Activated CD4-positive, alpha-beta T cell treated with anti-CD3 and anti-CD28 coated beads for 36 hours (primary cell): ENCODE measurements at regions of chr15 and their contacts with region 1.

Region 1: GRCh38 chr15:60649845-60650548 is 171.1 kb upstream of the ICE2 start:
- DNase-seq: peak; percentile 68
- ATAC-seq: peak; percentile 89
- H3K4me3 Mint-ChIP-seq: peak overlapping the region; percentile 27
- H3K27ac Mint-ChIP-seq: peak overlapping the region; percentile 82
- H3K4me1 Mint-ChIP-seq: peaks cover 47% of the 10 kb centered on the region
- H3K27me3 Mint-ChIP-seq: no peaks in the 10 kb centered on the region

Region 2: GRCh38 chr15:60592371-60593169 is 57.4 kb before region 1 on chr15:
- CTCF ChIA-PET with region 1: interaction called, 4 read pairs
- POLR2A ChIA-PET with region 1: no interaction called
- intact Hi-C with region 1: loop called (anchors 2 kb)
- DNase-seq: peak; percentile 91
- ATAC-seq: peak; percentile 85
- H3K4me3 Mint-ChIP-seq: peak overlapping the region; percentile 76
- H3K27ac Mint-ChIP-seq: peak overlapping the region; percentile 51
- H3K4me1 Mint-ChIP-seq: peaks cover 47% of the 10 kb centered on the region
- H3K27me3 Mint-ChIP-seq: no peaks in the 10 kb centered on the region

Region 3: DNA sequence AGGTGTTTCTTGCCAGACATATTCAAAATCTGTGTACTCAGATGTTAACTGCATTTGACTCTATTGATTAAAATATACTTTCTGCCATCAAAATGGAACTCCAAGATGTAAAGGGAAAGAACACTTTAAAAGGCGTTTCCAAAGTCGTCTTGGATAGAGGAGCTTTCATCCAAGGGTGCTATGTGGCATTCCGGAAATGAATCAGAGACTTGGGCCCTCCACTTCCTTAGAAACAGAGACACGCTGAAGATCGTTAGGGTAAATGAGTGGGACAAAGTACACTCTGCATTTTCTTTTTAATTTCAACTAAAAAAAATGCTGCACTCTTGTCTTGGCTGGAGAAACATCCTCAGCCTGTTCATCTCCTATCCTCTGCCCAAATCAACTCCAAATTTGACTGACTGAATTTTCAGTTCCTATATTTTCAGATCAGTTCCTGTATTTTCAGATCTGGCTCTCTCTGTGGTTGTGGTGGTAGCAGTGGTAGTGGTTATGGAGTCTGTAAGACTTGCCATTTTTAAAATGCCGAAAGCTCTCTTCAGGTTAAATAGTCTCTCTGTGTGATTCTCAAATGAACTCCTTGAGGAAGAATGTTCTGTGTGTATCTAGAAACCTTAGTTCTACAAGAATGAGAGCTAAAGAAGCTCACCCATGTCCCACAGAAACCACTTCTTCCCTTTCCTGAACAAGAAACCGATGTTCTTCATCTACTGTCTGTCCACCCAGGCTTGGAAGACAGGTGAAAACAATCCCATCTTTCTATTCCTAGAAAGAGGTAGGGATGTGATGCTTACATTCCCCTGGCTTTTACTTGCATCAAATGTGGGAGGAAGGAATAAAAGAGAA is 14.3 kb before region 1 on chr15:
- CTCF ChIA-PET with region 1: no interaction called
- POLR2A ChIA-PET with region 1: no interaction called
- intact Hi-C with region 1: no loop called
- DNase-seq: no peak
- ATAC-seq: no peak
- H3K4me3 Mint-ChIP-seq: no peak overlapping the region
- H3K27ac Mint-ChIP-seq: no peak overlapping the region
- H3K4me1 Mint-ChIP-seq: peaks cover 7% of the 10 kb centered on the region
- H3K27me3 Mint-ChIP-seq: no peaks in the 10 kb centered on the region

Region 4: GRCh38 chr15:60660290-60661051 is 10.5 kb after region 1 on chr15:
- CTCF ChIA-PET with region 1: interaction called, 4 read pairs
- POLR2A ChIA-PET with region 1: no interaction called
- intact Hi-C with region 1: loop called in 1 of 2 experiments (anchors 1 kb)
- DNase-seq: no peak
- ATAC-seq: peak; percentile 99
- H3K4me3 Mint-ChIP-seq: no peak overlapping the region
- H3K27ac Mint-ChIP-seq: no peak overlapping the region
- H3K4me1 Mint-ChIP-seq: peaks cover 22% of the 10 kb centered on the region
- H3K27me3 Mint-ChIP-seq: no peaks in the 10 kb centered on the region

Region 5: DNA sequence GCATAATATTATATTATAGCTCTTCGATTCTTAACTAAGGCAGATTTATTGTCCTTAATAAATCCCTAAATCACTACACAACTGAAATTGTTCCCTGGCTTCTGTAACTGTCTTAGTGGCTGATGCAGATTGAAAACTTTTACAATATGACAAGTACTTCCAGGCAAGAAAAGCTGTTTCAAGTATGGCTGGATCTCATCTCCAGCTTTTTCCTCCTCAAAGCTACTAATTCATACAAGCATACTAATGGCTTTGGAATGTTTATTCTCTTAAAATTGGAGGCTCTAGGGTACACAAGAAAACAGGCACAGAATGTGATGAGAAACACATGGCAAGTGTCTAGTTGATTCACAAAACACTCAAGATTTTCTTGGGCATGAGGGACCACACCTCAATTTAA is 180.5 kb after region 1 on chr15:
- CTCF ChIA-PET with region 1: no interaction called
- POLR2A ChIA-PET with region 1: no interaction called
- intact Hi-C with region 1: no loop called
- DNase-seq: no peak
- ATAC-seq: no peak
- H3K4me3 Mint-ChIP-seq: no peak overlapping the region
- H3K27ac Mint-ChIP-seq: no peak overlapping the region
- H3K4me1 Mint-ChIP-seq: peaks cover 7% of the 10 kb centered on the region
- H3K27me3 Mint-ChIP-seq: no peaks in the 10 kb centered on the region

Region 6: DNA sequence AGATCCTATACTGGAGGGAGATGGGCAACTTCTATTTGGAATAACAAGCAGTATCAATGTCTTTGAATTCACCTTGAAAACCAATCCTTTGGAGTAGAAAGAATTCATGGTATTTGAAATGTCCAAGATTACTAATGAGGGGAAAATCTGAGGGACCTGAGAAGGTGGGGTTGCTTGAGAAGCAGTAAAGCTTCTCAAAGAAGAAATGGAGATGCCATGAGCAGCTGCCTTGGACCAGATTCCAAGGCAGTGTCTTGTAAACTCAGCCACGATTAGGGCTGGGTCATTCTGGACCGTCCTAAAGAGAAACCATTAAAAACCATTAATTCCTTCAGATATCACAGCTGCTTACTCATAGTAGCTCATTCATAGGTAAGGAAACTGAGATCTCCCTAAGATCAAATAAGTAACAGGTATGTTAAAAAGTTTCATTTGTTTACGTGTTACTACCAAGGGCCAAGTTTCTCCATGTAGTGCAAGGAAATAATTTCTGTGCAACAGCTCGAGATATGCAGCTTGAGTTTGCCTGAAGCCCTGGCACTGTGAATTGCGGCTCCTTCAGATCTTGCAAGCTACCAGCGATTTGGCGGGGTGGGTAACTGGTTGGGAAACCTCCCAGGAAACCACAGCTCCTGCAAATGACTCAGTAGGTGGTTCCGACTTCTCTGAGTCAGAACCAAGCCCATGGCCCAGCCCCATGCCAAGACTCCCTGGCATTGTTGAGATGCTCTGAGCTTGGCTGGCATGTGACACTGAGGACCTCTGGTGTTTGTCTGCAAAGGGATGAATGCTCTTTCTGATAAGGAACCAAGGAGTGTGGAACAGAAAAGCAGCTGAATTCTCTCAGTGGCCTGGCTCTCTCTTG is 282.3 kb after region 1 on chr15:
- CTCF ChIA-PET with region 1: interaction called, 5 read pairs
- POLR2A ChIA-PET with region 1: interaction called, 11 read pairs
- intact Hi-C with region 1: no loop called
- DNase-seq: peak; percentile 79
- ATAC-seq: peak; percentile 95
- H3K4me3 Mint-ChIP-seq: no peak overlapping the region
- H3K27ac Mint-ChIP-seq: no peak overlapping the region
- H3K4me1 Mint-ChIP-seq: peaks cover 11% of the 10 kb centered on the region
- H3K27me3 Mint-ChIP-seq: peaks cover 6% of the 10 kb centered on the region

Region 7: DNA sequence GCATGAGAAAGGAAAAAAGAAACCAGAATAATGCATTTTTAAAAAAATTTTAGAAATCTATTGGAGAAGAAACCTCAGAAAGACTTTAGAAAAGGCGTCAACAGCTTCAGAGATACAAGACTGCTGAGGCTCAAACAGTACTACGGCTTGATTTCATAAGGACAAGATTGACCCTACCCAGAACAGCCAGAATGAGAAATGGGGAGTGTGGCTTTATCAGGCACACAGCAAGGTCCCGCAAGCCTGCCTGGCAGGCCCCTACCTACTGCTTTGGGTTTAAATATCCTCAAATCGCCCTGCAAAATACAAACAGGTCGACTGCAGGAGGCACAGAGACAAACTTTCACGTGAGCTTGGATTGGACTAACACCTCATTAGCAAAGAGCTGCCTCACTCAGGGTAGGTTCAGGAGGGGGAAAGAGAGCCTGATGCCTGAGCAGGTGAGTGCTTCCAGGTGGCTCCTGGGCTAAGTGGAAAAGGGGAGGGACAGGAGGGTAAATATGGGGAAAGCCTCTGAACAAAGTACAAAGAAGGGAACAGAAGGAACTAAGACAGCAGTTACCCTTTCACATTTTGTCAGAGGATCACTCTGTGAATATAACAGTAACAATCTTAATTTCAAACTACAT is 491.6 kb after region 1 on chr15:
- CTCF ChIA-PET with region 1: no interaction called
- POLR2A ChIA-PET with region 1: no interaction called
- intact Hi-C with region 1: no loop called
- DNase-seq: no peak
- ATAC-seq: no peak
- H3K4me3 Mint-ChIP-seq: no peak overlapping the region
- H3K27ac Mint-ChIP-seq: no peak overlapping the region
- H3K4me1 Mint-ChIP-seq: no peaks in the 10 kb centered on the region
- H3K27me3 Mint-ChIP-seq: peaks cover 25% of the 10 kb centered on the region